ENCODE measurements at regions of chr3 and their contacts with region 1.

Region 1: GRCh38 chr3:45938864-45939263 is 4.4 kb upstream of the CXCR6 start:
- DNase-seq: peak; percentile 97
- ATAC-seq: peak; percentile 65
- H3K4me3 Mint-ChIP-seq: no peak overlapping the region
- H3K27ac Mint-ChIP-seq: no peak overlapping the region
- H3K4me1 Mint-ChIP-seq: peaks cover 34% of the 10 kb centered on the region
- H3K27me3 Mint-ChIP-seq: peaks cover 2% of the 10 kb centered on the region
- CTCF ChIP-seq: peak; percentile 73

Region 2: DNA sequence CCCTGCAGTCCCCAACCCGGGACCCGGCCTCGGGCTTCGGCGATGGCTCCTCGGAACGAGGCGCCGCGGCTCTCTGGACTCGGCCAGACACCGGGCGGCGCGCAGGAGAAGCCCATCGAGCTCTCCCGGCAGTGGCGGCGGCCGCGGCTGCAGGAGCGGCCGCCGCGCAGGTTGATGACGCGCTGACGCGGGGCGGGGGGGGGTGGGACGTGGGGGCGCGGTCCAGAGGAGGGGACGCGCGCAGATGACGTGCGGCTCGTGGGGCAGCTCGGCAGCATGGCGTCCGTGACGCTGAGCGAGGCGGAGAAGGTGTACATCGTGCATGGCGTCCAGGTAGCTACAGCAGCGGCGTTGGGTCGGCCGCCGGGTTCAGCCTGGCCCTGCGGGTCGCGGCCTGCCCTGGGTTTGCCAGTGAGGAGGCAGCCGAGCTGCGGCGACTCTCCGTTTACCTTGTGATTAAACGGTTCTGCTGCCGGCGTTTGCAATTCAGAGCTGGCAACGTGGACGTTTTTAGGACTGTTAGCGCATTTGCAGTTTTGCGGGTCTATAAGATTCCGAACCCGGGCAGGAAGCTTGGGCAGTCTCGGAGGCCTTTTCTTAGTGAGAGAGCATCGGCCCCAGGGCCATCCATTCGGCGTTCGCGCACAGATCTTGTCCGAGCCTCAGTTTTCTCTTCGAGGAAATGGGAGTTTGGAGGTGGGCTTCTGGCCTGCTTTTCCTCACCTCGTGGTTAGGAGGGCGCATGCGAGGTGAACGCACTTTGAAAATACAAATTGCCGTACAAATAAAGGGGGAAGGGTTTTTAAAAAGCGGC is 962.7 kb before region 1 on chr3 and contains the starts of genes EXOSC7 and ZDHHC3:
- CTCF ChIA-PET with region 1: no interaction called
- POLR2A ChIA-PET with region 1: no interaction called
- intact Hi-C with region 1: no loop called
- DNase-seq: peak; percentile 90
- ATAC-seq: peak; percentile 91
- H3K4me3 Mint-ChIP-seq: peak within 1 kb of the TSS; percentile 86
- H3K27ac Mint-ChIP-seq: peak within 1 kb of the TSS; percentile 91
- H3K4me1 Mint-ChIP-seq: peaks cover 61% of the 10 kb centered on the region
- H3K27me3 Mint-ChIP-seq: no peaks in the 10 kb centered on the region
- CTCF ChIP-seq: no peak
- total RNA-seq, gene EXOSC7: 79.8 to 80.7 TPM
- total RNA-seq, gene ZDHHC3: 28.6 to 36.0 TPM

Region 3: GRCh38 chr3:45911511-45912226 is 27.2 kb before region 1 on chr3:
- CTCF ChIA-PET with region 1: no interaction called
- POLR2A ChIA-PET with region 1: no interaction called
- intact Hi-C with region 1: no loop called
- DNase-seq: no peak
- ATAC-seq: no peak
- H3K4me3 Mint-ChIP-seq: no peak overlapping the region
- H3K27ac Mint-ChIP-seq: no peak overlapping the region
- H3K4me1 Mint-ChIP-seq: peaks cover 39% of the 10 kb centered on the region
- H3K27me3 Mint-ChIP-seq: peaks cover 26% of the 10 kb centered on the region
- CTCF ChIP-seq: no peak

Region 4: DNA sequence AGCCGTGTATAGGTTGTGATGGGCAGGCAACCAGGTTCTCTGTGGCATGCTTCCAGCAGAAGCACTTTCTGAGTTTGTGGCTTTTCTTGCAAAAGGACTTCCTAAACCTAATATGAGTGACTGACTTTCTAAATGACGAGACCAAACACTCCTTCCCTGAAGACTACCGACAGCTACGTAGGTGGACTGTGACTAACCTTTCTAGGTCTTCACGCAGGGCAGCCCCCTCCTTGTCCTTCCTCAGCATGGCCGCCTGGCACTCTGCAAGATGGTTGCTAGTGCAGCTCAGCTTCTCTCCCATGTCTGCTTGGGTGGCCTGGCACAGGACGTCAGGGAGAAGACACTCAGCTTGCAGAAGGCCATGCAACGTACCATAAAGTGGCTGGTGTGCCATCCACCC is 25.3 kb after region 1 on chr3:
- CTCF ChIA-PET with region 1: interaction called, 24 read pairs
- POLR2A ChIA-PET with region 1: interaction called, 11 read pairs
- intact Hi-C with region 1: no loop called
- DNase-seq: peak; percentile 84
- ATAC-seq: peak; percentile 88
- H3K4me3 Mint-ChIP-seq: no peak overlapping the region
- H3K27ac Mint-ChIP-seq: peak overlapping the region; percentile 82
- H3K4me1 Mint-ChIP-seq: peaks cover 65% of the 10 kb centered on the region
- H3K27me3 Mint-ChIP-seq: no peaks in the 10 kb centered on the region
- CTCF ChIP-seq: no peak

Region 5: DNA sequence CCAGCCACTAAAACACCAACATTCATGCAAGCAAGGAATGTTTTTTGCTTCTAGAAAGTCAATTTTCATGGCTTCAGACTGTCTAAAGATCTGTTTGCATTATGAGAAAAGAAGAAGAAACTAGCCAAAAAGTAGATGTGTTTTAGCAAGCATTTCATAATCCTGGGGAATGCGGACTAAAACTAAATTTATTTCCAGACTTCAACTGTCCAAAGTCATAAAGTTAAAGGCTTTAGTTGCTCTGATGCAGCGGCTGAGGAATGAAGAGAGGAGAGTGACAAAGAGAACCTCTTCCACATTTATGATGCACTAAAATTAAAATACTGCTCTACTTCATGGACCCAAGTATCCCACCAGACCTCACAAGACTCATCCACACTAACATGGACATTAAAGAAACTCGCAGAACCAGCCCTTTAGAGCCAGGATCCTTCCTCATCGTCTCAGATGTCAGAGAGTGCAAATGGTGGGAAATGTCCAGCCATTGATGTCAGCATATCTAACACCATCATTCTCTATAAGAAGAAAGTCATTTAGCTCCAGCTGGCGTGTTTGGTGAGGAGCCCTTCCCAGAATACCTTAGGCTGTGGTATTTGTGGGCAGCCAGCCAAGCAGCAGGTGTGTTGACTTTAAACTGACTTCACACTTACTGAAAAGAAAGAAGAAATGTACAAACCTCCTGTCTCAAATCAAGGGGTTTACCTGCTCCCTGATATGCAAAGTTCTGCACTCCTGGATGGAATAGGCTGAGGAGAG is 39.3 kb after region 1 on chr3:
- CTCF ChIA-PET with region 1: interaction called, 13 read pairs
- POLR2A ChIA-PET with region 1: interaction called, 4 read pairs
- intact Hi-C with region 1: loop called (anchors 5 kb)
- DNase-seq: peak; percentile 90
- ATAC-seq: peak; percentile 17
- H3K4me3 Mint-ChIP-seq: peak overlapping the region; percentile 66
- H3K27ac Mint-ChIP-seq: peak overlapping the region; percentile 96
- H3K4me1 Mint-ChIP-seq: peaks cover 88% of the 10 kb centered on the region
- H3K27me3 Mint-ChIP-seq: no peaks in the 10 kb centered on the region
- CTCF ChIP-seq: no peak

Region 6: DNA sequence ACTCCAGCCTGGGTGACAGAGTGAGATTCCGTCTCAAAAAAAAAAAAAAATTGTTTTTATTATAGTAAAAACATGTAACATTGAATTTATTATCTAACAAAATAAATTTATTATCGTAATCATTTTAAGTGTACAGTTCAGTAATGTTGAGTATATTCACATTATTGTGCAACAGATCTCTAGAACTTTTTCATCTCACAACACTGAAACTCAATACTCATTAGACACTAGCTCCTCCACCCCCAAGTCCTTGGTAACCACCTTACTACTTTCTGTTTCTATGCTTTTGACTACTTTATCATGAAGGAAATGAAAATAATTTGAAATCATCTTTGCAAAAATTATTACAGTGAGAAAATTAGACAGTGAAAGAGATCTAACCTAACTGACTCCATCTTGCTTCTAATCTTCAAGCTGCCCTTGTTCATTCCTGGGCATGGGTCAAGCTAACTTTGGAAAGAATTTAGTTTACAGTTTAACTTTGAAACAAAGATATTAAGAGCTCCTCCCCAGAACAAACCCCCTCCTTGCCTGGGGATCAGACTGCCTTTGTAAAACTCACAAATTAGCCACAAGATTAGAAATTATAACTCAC is 71.8 kb after region 1 on chr3:
- CTCF ChIA-PET with region 1: interaction called, 10 read pairs
- POLR2A ChIA-PET with region 1: interaction called, 3 read pairs
- intact Hi-C with region 1: no loop called
- DNase-seq: no peak
- ATAC-seq: peak; percentile 65
- H3K4me3 Mint-ChIP-seq: no peak overlapping the region
- H3K27ac Mint-ChIP-seq: peak overlapping the region; percentile 46
- H3K4me1 Mint-ChIP-seq: peaks cover 27% of the 10 kb centered on the region
- H3K27me3 Mint-ChIP-seq: peaks cover 4% of the 10 kb centered on the region
- CTCF ChIP-seq: no peak

Region 7: GRCh38 chr3:46378426-46378942 is 439.6 kb after region 1 on chr3:
- CTCF ChIA-PET with region 1: interaction called, 11 read pairs
- POLR2A ChIA-PET with region 1: no interaction called
- intact Hi-C with region 1: loop called (anchors 10 kb)
- DNase-seq: peak; percentile 81
- ATAC-seq: peak; percentile 42
- H3K4me3 Mint-ChIP-seq: no peak overlapping the region
- H3K27ac Mint-ChIP-seq: no peak overlapping the region
- H3K4me1 Mint-ChIP-seq: peaks cover 33% of the 10 kb centered on the region
- H3K27me3 Mint-ChIP-seq: peaks cover 6% of the 10 kb centered on the region
- CTCF ChIP-seq: peak; percentile 90

Measured in activated CD8-positive, alpha-beta T cell treated with anti-CD3 and anti-CD28 coated beads for 36 hours (primary cell).